Activated CD4-positive, alpha-beta T cell treated with anti-CD3 and anti-CD28 coated beads, Interleukin-2, amount 10 ng/mL, durations not matched to agents 24 days and 14 days (primary cell): ENCODE measurements at regions of chr4 and their contacts with region 1.

Region 1: GRCh38 chr4:40056716-40057585 is at the start of gene N4BP2:
- DNase-seq: peak; percentile 92
- H3K4me3 Mint-ChIP-seq: peak within 1 kb of the TSS; percentile 91
- H3K27ac Mint-ChIP-seq: peak within 1 kb of the TSS; percentile 99
- H3K4me1 Mint-ChIP-seq: peaks cover 30% of the 10 kb centered on the region
- H3K27me3 Mint-ChIP-seq: peaks cover 3% of the 10 kb centered on the region
- total RNA-seq, gene N4BP2: 24.5 and 24.7 TPM in 2 replicates

Region 2: DNA sequence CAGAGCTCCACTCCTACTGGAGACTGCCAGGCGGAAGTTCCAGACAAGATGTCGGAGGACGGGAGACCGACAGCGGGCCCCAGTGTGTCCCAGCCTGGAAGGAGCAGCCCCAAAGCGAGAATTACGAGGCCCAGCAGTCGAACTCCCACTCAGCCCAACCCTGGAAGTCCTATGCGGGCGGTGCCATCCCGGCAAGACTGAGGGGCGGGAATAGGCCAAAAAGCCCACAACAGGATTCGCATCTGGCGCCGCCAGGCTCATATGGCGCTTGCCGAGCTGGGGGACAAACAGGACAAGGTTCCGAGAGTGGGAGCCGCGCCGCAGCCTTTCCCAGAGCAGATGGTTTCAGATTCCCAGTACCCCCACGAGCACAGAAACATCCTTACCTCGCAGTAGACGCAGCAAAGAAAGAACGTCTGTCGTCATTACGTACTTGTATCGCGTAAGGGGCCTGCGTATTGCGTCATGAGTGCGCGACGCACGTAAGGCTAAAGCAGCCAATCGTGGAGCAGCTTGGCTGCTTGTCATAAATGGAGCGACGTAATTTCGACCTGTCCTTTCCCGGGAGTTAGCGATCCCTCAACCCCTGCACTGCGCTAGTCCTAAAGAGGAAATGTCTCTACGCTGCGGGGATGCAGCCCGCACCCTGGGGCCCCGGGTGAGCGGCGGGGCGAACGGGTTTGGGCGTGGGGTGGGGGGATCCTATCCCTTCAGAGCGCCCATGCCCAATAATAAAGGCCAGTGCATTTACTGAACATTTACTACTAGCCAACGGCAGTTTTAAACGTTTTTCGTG is 598.2 kb before region 1 on chr4 and contains the starts of genes LIAS and RPL9:
- intact Hi-C with region 1: loop called (anchors 2 kb)
- DNase-seq: peak; percentile 98
- H3K4me3 Mint-ChIP-seq: peak within 1 kb of the TSS; percentile 89
- H3K27ac Mint-ChIP-seq: peak within 1 kb of the TSS; percentile 98
- H3K4me1 Mint-ChIP-seq: peaks cover 35% of the 10 kb centered on the region
- H3K27me3 Mint-ChIP-seq: peaks cover 2% of the 10 kb centered on the region
- total RNA-seq, gene LIAS: 27.7 and 29.2 TPM in 2 replicates
- total RNA-seq, gene RPL9: 1,785 and 1,789 TPM in 2 replicates

Region 3: DNA sequence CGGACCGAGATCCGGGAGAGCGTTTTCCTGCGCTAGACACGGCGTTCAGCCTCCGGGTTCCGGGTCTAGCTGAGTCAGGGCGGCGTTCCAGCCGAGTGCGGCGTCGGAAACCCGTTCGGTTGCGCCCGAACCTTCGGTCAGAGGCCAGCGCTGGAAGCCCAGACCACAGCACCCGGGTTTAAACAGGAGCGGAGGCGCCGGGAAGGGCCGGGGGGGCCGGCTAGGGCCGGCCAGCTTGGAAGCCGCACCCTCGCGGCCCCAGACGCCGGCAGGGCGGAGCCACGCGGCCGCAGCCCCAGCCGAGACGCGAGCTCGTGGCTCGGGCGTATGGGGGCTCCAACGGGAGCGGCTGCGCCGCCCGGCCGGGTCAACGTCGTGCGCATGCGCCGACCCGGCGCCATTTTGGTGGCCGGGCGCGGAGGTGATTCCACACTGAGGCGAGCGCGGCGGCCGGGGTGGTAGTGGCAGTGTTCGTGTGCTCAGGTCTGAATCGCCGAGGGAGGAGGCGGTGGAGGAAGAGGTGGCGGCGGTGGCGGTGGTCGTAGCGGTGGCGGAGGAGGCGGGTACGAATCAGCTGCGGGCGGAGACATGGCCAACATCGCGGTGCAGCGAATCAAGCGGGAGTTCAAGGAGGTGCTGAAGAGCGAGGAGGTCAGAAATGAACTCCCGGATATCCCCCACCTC is 359.1 kb before region 1 on chr4 and contains the start of gene UBE2K:
- intact Hi-C with region 1: loop called (anchors 2 kb)
- DNase-seq: peak; percentile 98
- H3K4me3 Mint-ChIP-seq: peak within 1 kb of the TSS; percentile 99
- H3K27ac Mint-ChIP-seq: peak within 1 kb of the TSS; percentile 99
- H3K4me1 Mint-ChIP-seq: peaks cover 24% of the 10 kb centered on the region
- H3K27me3 Mint-ChIP-seq: no peaks in the 10 kb centered on the region
- total RNA-seq, gene UBE2K: 99.4 and 106 TPM in 2 replicates

Region 4: DNA sequence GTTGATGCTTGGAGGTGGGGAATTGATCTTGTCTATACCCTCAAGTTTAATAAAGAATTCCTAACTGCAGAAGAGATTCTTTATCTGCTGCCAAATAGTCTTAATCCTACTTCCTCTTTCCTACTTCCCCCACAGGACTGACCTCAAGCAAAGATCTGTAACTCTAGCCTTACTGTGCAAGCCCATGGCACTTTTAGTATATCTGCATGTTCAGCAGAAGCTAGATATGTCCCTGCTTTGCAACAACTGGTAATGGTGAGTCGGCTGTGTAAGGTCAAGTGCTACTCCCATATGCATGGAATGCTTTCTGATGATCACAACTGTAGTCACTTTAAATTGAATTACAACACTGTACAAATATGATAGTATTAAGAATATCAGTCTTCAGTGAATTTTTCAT is 53.0 kb before region 1 on chr4:
- intact Hi-C with region 1: no loop called
- DNase-seq: no peak
- H3K4me3 Mint-ChIP-seq: no peak overlapping the region
- H3K27ac Mint-ChIP-seq: no peak overlapping the region
- H3K4me1 Mint-ChIP-seq: no peaks in the 10 kb centered on the region
- H3K27me3 Mint-ChIP-seq: no peaks in the 10 kb centered on the region

Region 5: GRCh38 chr4:40121515-40121914 is 64.6 kb after region 1 on chr4:
- intact Hi-C with region 1: loop called (anchors 5 kb)
- DNase-seq: no peak
- H3K4me3 Mint-ChIP-seq: no peak overlapping the region
- H3K27ac Mint-ChIP-seq: peak overlapping the region; percentile 43
- H3K4me1 Mint-ChIP-seq: peaks cover 22% of the 10 kb centered on the region
- H3K27me3 Mint-ChIP-seq: no peaks in the 10 kb centered on the region

Region 6: DNA sequence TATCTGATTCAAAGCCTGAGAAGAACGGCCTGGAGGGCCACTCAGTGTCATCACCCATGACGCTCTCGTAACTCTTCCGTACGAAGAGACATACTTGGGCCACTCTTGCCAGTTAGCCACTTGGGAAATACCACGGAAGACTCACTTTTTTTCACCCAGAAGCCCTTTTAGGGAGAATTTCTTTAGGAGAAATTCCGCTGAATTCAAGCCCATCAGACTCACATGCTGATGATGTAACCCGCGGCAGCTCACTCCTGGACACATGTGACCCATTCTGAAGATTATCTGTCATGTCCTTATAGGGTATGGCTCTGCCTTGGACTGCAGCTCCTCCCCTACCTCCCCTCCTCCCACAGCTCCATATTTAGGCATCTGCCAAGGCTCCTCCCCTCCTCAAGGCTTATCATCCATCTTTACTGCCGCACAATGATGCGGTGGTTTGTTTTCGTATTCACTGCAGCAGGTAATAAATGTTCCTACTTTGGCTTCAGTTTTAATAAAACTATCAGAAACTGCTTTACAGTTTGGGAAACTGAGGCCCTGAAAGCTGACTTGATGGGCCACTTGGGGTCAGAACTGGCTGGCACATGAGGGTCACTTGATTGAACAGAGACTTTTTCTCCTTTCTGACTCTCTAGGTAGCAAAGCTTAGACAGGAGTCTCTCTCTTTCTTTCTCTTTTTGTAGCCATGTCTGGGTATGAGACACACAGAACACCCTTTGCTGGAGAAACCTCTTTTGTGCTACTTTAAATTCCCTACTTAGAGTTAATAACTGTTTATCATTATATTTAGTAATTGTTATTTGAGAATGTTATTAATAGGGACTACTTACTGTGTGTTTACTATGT is 182.0 kb after region 1 on chr4:
- intact Hi-C with region 1: loop called (anchors 5 kb)
- DNase-seq: peak; percentile 92
- H3K4me3 Mint-ChIP-seq: peak overlapping the region; percentile 75
- H3K27ac Mint-ChIP-seq: peak overlapping the region; percentile 95
- H3K4me1 Mint-ChIP-seq: peaks cover 81% of the 10 kb centered on the region
- H3K27me3 Mint-ChIP-seq: no peaks in the 10 kb centered on the region

Region 7: GRCh38 chr4:40719008-40719623 is 662.2 kb after region 1 on chr4:
- intact Hi-C with region 1: loop called (anchors 10 kb)
- DNase-seq: peak; percentile 70
- H3K4me3 Mint-ChIP-seq: no peak overlapping the region
- H3K27ac Mint-ChIP-seq: peak overlapping the region; percentile 4
- H3K4me1 Mint-ChIP-seq: peaks cover 35% of the 10 kb centered on the region
- H3K27me3 Mint-ChIP-seq: no peaks in the 10 kb centered on the region